ENCODE measurements at regions of chr19 and their contacts with region 1.

Region 1: GRCh38 chr19:15101479-15102082 is 5.6 kb upstream of the SYDE1 start:
- DNase-seq: no peak
- H3K4me3 ChIP-seq: no peak overlapping the region
- H3K27me3 ChIP-seq: no peaks in the 10 kb centered on the region
- CTCF ChIP-seq: peak; percentile 78

Region 2: DNA sequence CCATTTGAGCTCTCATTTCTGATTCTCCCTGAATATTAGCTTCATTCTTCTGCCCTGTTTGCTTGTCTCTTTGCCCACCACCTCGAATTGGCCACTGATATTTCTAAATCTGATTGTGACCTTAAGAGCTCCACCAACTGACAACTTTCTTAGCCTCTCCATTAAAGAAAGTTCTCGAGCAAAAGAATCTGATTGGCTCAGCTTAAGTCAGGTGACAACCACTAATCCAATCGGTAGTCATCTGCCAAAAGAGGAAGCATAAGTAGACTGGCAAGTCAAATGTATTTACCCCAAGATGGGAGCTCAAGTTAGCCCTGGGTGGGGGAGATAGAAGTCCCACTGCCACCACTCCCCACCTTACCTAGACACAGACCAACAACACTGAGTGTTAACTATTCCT is 57.7 kb after region 1 on chr19:
- CTCF ChIA-PET with region 1: interaction called, 76 read pairs
- POLR2A ChIA-PET with region 1: no interaction called
- DNase-seq: no peak
- H3K4me3 ChIP-seq: no peak overlapping the region
- H3K27me3 ChIP-seq: no peaks in the 10 kb centered on the region
- CTCF ChIP-seq: no peak

Measured in BJ (cell line).